Activated CD4-positive, alpha-beta T cell treated with anti-CD3 and anti-CD28 coated beads for 36 hours (primary cell): ENCODE measurements at regions of chr2 and their contacts with region 1.

Region 1: GRCh38 chr2:46942139-46942517 is 26.5 kb upstream of the MCFD2 start:
- DNase-seq: peak; percentile 85
- ATAC-seq: peak; percentile 42
- H3K4me3 Mint-ChIP-seq: peak overlapping the region; percentile 94
- H3K27ac Mint-ChIP-seq: peak overlapping the region; percentile 98
- H3K4me1 Mint-ChIP-seq: peaks cover 45% of the 10 kb centered on the region
- H3K27me3 Mint-ChIP-seq: no peaks in the 10 kb centered on the region

Region 2: DNA sequence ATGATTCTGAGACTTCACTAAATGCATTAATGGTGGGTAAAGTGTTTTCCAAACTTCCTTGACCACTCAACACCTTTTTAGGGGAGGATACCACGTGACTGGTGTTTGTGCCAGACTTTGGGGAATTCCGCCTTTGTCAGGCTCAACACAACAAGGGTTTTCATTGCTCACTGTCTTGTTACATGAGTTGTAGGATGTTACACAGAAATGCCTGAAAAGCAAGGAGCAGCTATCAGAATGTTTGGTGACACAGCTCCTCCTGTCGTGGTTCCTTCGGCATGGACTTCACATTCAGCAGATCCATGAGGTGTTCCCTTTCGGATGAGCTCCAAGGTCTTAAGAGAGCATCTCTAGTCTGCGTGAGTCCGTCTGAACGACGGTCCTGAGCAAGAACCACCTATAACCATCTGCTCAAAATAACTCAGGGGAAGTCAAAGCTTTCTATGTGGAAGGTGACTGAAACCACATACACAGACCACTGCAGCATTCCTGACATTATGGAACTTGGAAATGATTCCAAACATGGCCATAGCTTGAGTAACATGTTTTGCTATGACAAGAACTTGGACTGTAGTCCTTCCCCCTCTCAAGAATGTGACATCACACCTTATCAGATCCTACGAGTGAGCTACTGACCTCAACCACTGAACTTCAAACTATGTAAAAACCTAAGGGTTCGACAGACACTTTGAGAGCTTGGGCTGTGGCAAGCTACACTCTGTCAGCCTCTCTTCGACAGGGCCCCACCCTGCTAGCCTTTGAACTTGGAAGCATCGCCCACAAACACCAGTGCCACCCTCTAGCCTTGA is 84.0 kb before region 1 on chr2:
- CTCF ChIA-PET with region 1: no interaction called
- POLR2A ChIA-PET with region 1: no interaction called
- intact Hi-C with region 1: no loop called
- DNase-seq: no peak
- ATAC-seq: no peak
- H3K4me3 Mint-ChIP-seq: no peak overlapping the region
- H3K27ac Mint-ChIP-seq: no peak overlapping the region
- H3K4me1 Mint-ChIP-seq: no peaks in the 10 kb centered on the region
- H3K27me3 Mint-ChIP-seq: no peaks in the 10 kb centered on the region

Region 3: GRCh38 chr2:46923041-46923528 is 19.0 kb before region 1 on chr2:
- CTCF ChIA-PET with region 1: interaction called, 47 read pairs
- POLR2A ChIA-PET with region 1: interaction called, 7 read pairs
- intact Hi-C with region 1: loop called in 1 of 2 experiments (anchors 1 kb)
- DNase-seq: no peak
- ATAC-seq: no peak
- H3K4me3 Mint-ChIP-seq: no peak overlapping the region
- H3K27ac Mint-ChIP-seq: no peak overlapping the region
- H3K4me1 Mint-ChIP-seq: peaks cover 34% of the 10 kb centered on the region
- H3K27me3 Mint-ChIP-seq: no peaks in the 10 kb centered on the region

Region 4: GRCh38 chr2:46984642-46985476 is 42.7 kb after region 1 on chr2:
- CTCF ChIA-PET with region 1: interaction called, 8 read pairs
- POLR2A ChIA-PET with region 1: interaction called, 7 read pairs
- intact Hi-C with region 1: loop called (anchors 1 kb)
- DNase-seq: peak; percentile 79
- ATAC-seq: peak; percentile 87
- H3K4me3 Mint-ChIP-seq: peak overlapping the region; percentile 59
- H3K27ac Mint-ChIP-seq: peak overlapping the region; percentile 96
- H3K4me1 Mint-ChIP-seq: peaks cover 68% of the 10 kb centered on the region
- H3K27me3 Mint-ChIP-seq: no peaks in the 10 kb centered on the region

Region 5: GRCh38 chr2:47218066-47218581 is 276.0 kb after region 1 on chr2:
- CTCF ChIA-PET with region 1: no interaction called
- POLR2A ChIA-PET with region 1: no interaction called
- intact Hi-C with region 1: no loop called
- DNase-seq: no peak
- ATAC-seq: no peak
- H3K4me3 Mint-ChIP-seq: no peak overlapping the region
- H3K27ac Mint-ChIP-seq: no peak overlapping the region
- H3K4me1 Mint-ChIP-seq: no peaks in the 10 kb centered on the region
- H3K27me3 Mint-ChIP-seq: no peaks in the 10 kb centered on the region